ENCODE measurements at regions of chr4 and their contacts with region 1.

Region 1: GRCh38 chr4:81844717-81845116 is 373.0 kb upstream of the RASGEF1B start:
- DNase-seq: peak; percentile 82 to 88
- H3K4me3 ChIP-seq: no peak overlapping the region
- H3K4me3 Mint-ChIP-seq: peak overlapping the region; percentile 13
- H3K27ac Mint-ChIP-seq: peak overlapping the region; percentile 67
- H3K4me1 ChIP-seq: peaks cover 42% of the 10 kb centered on the region
- H3K4me1 Mint-ChIP-seq: peaks cover 31% of the 10 kb centered on the region
- H3K27me3 ChIP-seq: no peaks in the 10 kb centered on the region
- H3K27me3 Mint-ChIP-seq: no peaks in the 10 kb centered on the region
- CTCF ChIP-seq: peak; percentile 64 to 70

Region 2: GRCh38 chr4:81405894-81406401 is 438.8 kb before region 1 on chr4:
- CTCF ChIA-PET with region 1: no interaction called
- POLR2A ChIA-PET with region 1: no interaction called
- intact Hi-C with region 1: loop called (anchors 1 kb)
- DNase-seq: peak; percentile 46 to 66
- H3K4me3 ChIP-seq: no peak overlapping the region
- H3K4me3 Mint-ChIP-seq: no peak overlapping the region
- H3K27ac Mint-ChIP-seq: no peak overlapping the region
- H3K4me1 ChIP-seq: no peaks in the 10 kb centered on the region
- H3K4me1 Mint-ChIP-seq: peaks cover 7% of the 10 kb centered on the region
- H3K27me3 ChIP-seq: no peaks in the 10 kb centered on the region
- H3K27me3 Mint-ChIP-seq: peaks cover 4% of the 10 kb centered on the region
- CTCF ChIP-seq: peak; percentile 51 to 85

Region 3: GRCh38 chr4:81609844-81610243 is 234.9 kb before region 1 on chr4:
- CTCF ChIA-PET with region 1: no interaction called
- POLR2A ChIA-PET with region 1: no interaction called
- intact Hi-C with region 1: no loop called
- DNase-seq: no peak
- H3K4me3 ChIP-seq: no peak overlapping the region
- H3K4me3 Mint-ChIP-seq: no peak overlapping the region
- H3K27ac Mint-ChIP-seq: no peak overlapping the region
- H3K4me1 ChIP-seq: no peaks in the 10 kb centered on the region
- H3K4me1 Mint-ChIP-seq: peaks cover 8% of the 10 kb centered on the region
- H3K27me3 ChIP-seq: no peaks in the 10 kb centered on the region
- H3K27me3 Mint-ChIP-seq: no peaks in the 10 kb centered on the region
- CTCF ChIP-seq: no peak

Region 4: GRCh38 chr4:81651243-81651899 is 193.3 kb before region 1 on chr4:
- CTCF ChIA-PET with region 1: no interaction called
- POLR2A ChIA-PET with region 1: no interaction called
- intact Hi-C with region 1: loop called (anchors 10 kb)
- DNase-seq: peak; percentile 19 to 46
- H3K4me3 ChIP-seq: no peak overlapping the region
- H3K4me3 Mint-ChIP-seq: no peak overlapping the region
- H3K27ac Mint-ChIP-seq: peak overlapping the region; percentile 75
- H3K4me1 ChIP-seq: peaks cover 28% of the 10 kb centered on the region
- H3K4me1 Mint-ChIP-seq: peaks cover 27% of the 10 kb centered on the region
- H3K27me3 ChIP-seq: no peaks in the 10 kb centered on the region
- H3K27me3 Mint-ChIP-seq: no peaks in the 10 kb centered on the region
- CTCF ChIP-seq: no peak

Region 5: DNA sequence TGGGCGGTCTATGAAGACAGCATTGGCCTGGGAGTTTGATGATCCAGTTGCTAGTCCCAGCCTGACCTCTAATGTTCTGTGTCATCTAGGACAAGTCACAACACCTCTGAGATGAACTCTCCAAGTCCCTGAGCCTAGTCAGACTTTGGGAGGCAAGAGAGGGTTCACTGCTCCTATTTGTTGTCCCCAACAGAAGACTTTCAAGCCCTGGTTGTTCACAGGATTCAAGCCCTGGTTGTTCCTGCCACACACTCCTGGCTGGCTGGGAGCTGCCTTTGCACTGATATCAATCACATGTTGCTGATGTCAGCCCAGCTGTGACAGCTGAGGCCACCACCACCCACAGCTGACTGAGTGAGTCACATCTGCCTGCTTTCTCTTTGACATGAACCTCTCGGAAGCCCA is 119.8 kb before region 1 on chr4:
- CTCF ChIA-PET with region 1: no interaction called
- POLR2A ChIA-PET with region 1: no interaction called
- intact Hi-C with region 1: loop called (anchors 2 kb)
- DNase-seq: peak; percentile 62 to 67
- H3K4me3 ChIP-seq: no peak overlapping the region
- H3K4me3 Mint-ChIP-seq: peak overlapping the region; percentile 20
- H3K27ac Mint-ChIP-seq: peak overlapping the region; percentile 51
- H3K4me1 ChIP-seq: peaks cover 35% of the 10 kb centered on the region
- H3K4me1 Mint-ChIP-seq: peaks cover 39% of the 10 kb centered on the region
- H3K27me3 ChIP-seq: no peaks in the 10 kb centered on the region
- H3K27me3 Mint-ChIP-seq: no peaks in the 10 kb centered on the region
- CTCF ChIP-seq: no peak

Region 6: GRCh38 chr4:81818385-81818920 is 26.3 kb before region 1 on chr4:
- CTCF ChIA-PET with region 1: no interaction called
- POLR2A ChIA-PET with region 1: no interaction called
- intact Hi-C with region 1: loop called (anchors 1 kb)
- DNase-seq: peak; percentile 78 to 82
- H3K4me3 ChIP-seq: no peak overlapping the region
- H3K4me3 Mint-ChIP-seq: peak overlapping the region; percentile 49
- H3K27ac Mint-ChIP-seq: peak overlapping the region; percentile 66
- H3K4me1 ChIP-seq: peaks cover 29% of the 10 kb centered on the region
- H3K4me1 Mint-ChIP-seq: peaks cover 22% of the 10 kb centered on the region
- H3K27me3 ChIP-seq: no peaks in the 10 kb centered on the region
- H3K27me3 Mint-ChIP-seq: no peaks in the 10 kb centered on the region
- CTCF ChIP-seq: no peak

Region 7: DNA sequence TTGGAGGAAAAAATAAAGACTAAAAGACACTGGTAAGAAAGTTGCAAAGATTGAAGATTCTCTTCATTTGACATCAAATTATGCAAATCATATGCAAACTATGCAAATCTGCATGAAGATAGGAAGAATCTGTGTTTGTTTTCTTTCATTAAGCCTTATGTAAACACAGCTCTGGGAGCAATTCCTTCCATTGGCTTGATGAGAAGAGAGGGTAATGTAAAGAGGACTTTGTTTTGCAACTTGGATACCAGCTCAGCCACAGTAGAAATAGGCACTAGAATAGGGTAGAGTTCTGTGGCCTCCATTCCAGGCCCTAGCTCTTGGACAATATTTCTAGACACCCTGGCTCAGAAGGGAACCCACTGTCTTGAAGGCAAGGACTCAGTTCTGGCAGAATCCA is 15.4 kb after region 1 on chr4:
- CTCF ChIA-PET with region 1: no interaction called
- POLR2A ChIA-PET with region 1: no interaction called
- intact Hi-C with region 1: no loop called
- DNase-seq: no peak
- H3K4me3 ChIP-seq: no peak overlapping the region
- H3K4me3 Mint-ChIP-seq: no peak overlapping the region
- H3K27ac Mint-ChIP-seq: no peak overlapping the region
- H3K4me1 ChIP-seq: no peaks in the 10 kb centered on the region
- H3K4me1 Mint-ChIP-seq: no peaks in the 10 kb centered on the region
- H3K27me3 ChIP-seq: no peaks in the 10 kb centered on the region
- H3K27me3 Mint-ChIP-seq: no peaks in the 10 kb centered on the region
- CTCF ChIP-seq: no peak

Region 8: GRCh38 chr4:82044142-82044993 is 199.7 kb after region 1 on chr4:
- CTCF ChIA-PET with region 1: no interaction called
- POLR2A ChIA-PET with region 1: no interaction called
- intact Hi-C with region 1: loop called (anchors 2 kb)
- DNase-seq: peak; percentile 79 to 80
- H3K4me3 ChIP-seq: peak overlapping the region; percentile 63
- H3K4me3 Mint-ChIP-seq: peak overlapping the region; percentile 93
- H3K27ac Mint-ChIP-seq: no peak overlapping the region
- H3K4me1 ChIP-seq: peaks cover 19% of the 10 kb centered on the region
- H3K4me1 Mint-ChIP-seq: peaks cover 7% of the 10 kb centered on the region
- H3K27me3 ChIP-seq: no peaks in the 10 kb centered on the region
- H3K27me3 Mint-ChIP-seq: no peaks in the 10 kb centered on the region
- CTCF ChIP-seq: no peak

Measured in Caco-2 (cell line).